K562 (cell line): ENCODE measurements at regions of chr2 and their contacts with region 1.

Region 1: GRCh38 chr2:88329815-88330603 is 122.5 kb downstream of the FOXI3 start:
- DNase-seq: no peak
- ATAC-seq: no peak
- H3K4me3 ChIP-seq: no peak overlapping the region
- H3K27ac ChIP-seq: no peak overlapping the region
- H3K4me1 ChIP-seq: no peaks in the 10 kb centered on the region
- H3K27me3 ChIP-seq: peaks cover 6 to 8% of the 10 kb centered on the region in 2 experiments; a peak in 4 of 5 replicates
- CTCF ChIP-seq: no peak
- EP300 ChIP-seq: no peak
- POLR2A ChIP-seq: no peak
- RAD21 ChIP-seq: no peak

Region 2: DNA sequence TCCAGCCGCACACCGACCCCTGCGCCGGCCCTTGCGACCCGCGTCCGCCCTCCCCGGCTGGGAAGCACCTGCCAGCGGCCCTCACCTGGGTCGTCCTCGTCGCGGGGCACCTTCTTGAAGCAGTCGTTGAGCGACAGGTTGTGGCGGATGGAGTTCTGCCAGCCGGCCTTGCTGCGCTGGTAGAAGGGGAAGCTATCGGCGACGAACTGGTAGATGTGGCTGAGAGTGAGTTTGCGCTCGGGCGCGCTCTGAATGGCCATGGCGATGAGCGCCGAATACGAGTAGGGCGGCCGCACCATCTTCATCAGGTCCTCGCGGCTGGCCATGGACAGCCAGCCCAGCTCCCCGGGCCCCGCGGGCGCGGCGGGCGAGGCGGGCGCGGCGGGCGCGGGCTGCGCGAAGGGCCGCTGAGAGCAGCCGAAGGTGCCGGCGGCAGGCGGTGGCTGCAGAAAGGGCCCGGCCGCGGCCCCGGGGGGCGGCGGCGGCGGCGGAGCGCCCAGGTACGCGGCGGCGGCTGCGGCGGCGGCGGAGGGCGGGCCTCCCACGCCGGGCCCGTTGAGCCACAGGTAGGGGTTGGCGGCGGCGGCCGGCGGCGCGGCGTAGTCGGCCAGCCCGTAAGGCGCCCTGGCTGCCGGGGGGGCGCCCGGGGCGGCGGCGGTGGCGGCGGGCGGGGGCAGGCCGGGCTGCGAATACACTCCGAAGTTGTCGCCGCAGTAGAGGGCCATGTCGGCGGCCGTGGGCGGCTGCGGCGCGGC is 122.0 kb after region 1 on chr2:
- CTCF ChIA-PET with region 1: no interaction called
- POLR2A ChIA-PET with region 1: no interaction called
- in situ Hi-C with region 1: no loop called
- intact Hi-C with region 1: loop called (anchors 10 kb)
- DNase-seq: no peak
- ATAC-seq: no peak
- H3K4me3 ChIP-seq: no peak overlapping the region
- H3K27ac ChIP-seq: no peak overlapping the region
- H3K4me1 ChIP-seq: no peaks in the 10 kb centered on the region
- H3K27me3 ChIP-seq: peaks cover 18 to 24% of the 10 kb centered on the region in 2 experiments
- CTCF ChIP-seq: no peak
- EP300 ChIP-seq: no peak
- POLR2A ChIP-seq: no peak
- RAD21 ChIP-seq: no peak

Region 3: GRCh38 chr2:88600038-88600465 is 270.0 kb after region 1 on chr2:
- CTCF ChIA-PET with region 1: no interaction called
- POLR2A ChIA-PET with region 1: no interaction called
- in situ Hi-C with region 1: no loop called
- intact Hi-C with region 1: no loop called
- DNase-seq: peak; percentile 72 to 78 (median 75)
- ATAC-seq: peak; percentile 97
- H3K4me3 ChIP-seq: no peak overlapping the region
- H3K27ac ChIP-seq: peak overlapping the region; percentile 25; the same call in 2 of the 3 replicates
- H3K4me1 ChIP-seq: peaks cover 0 to 17% of the 10 kb centered on the region in 2 experiments; a peak in 3 of 5 replicates
- H3K27me3 ChIP-seq: no peaks in the 10 kb centered on the region
- CTCF ChIP-seq: no peak
- EP300 ChIP-seq: 0 out of 2 replicates have a peak, but pooled peaks have one; percentile 15
- POLR2A ChIP-seq: no peak
- RAD21 ChIP-seq: no peak